ENCODE measurements at regions of chr22 and their contacts with region 1.

Region 1: GRCh38 chr22:40898850-40899357 is 37.0 kb upstream of the DNAJB7 start:
- DNase-seq: peak in 1 of 35 experiments; percentile 68
- ATAC-seq: peak; percentile 52 to 65 (median 58)
- H3K4me3 ChIP-seq: no peak overlapping the region
- H3K4me3 Mint-ChIP-seq: no peak overlapping the region
- H3K27ac ChIP-seq: no peak overlapping the region
- H3K27ac Mint-ChIP-seq: no peak overlapping the region
- H3K4me1 ChIP-seq: no peaks in the 10 kb centered on the region
- H3K4me1 Mint-ChIP-seq: peaks cover 5 to 9% (median 5%) of the 10 kb centered on the region in 3 donors
- H3K27me3 ChIP-seq: no peaks in the 10 kb centered on the region
- H3K27me3 Mint-ChIP-seq: no peaks in the 10 kb centered on the region

Region 2: GRCh38 chr22:40651563-40652501 is 247.1 kb before region 1 on chr22:
- CTCF ChIA-PET with region 1: interaction called in 1 of 2 experiments, 18 read pairs
- POLR2A ChIA-PET with region 1: no interaction called
- DNase-seq: peak; percentile 16 to 71 (median 54)
- ATAC-seq: peak; percentile 79 to 93 (median 87)
- H3K4me3 ChIP-seq: peak overlapping the region in 1 of 2 donors; percentile 58
- H3K4me3 Mint-ChIP-seq: peak overlapping the region; percentile 72 to 80 (median 75)
- H3K27ac ChIP-seq: peak overlapping the region; percentile 55
- H3K27ac Mint-ChIP-seq: peak overlapping the region; percentile 82 to 90
- H3K4me1 ChIP-seq: peaks cover 0 to 7% of the 10 kb centered on the region in 2 experiments
- H3K4me1 Mint-ChIP-seq: peaks cover 0 to 13% (median 5%) of the 10 kb centered on the region in 3 donors
- H3K27me3 ChIP-seq: no peaks in the 10 kb centered on the region
- H3K27me3 Mint-ChIP-seq: no peaks in the 10 kb centered on the region

Region 3: GRCh38 chr22:40679964-40680818 is 218.7 kb before region 1 on chr22:
- CTCF ChIA-PET with region 1: interaction called in 1 of 2 experiments, 20 read pairs
- POLR2A ChIA-PET with region 1: no interaction called
- DNase-seq: no peak
- ATAC-seq: no peak
- H3K4me3 ChIP-seq: no peak overlapping the region
- H3K4me3 Mint-ChIP-seq: no peak overlapping the region
- H3K27ac ChIP-seq: no peak overlapping the region
- H3K27ac Mint-ChIP-seq: peak overlapping the region in 1 of 2 donors; percentile 17
- H3K4me1 ChIP-seq: peaks cover 0 to 13% of the 10 kb centered on the region in 2 experiments
- H3K4me1 Mint-ChIP-seq: peaks cover 7 to 17% (median 13%) of the 10 kb centered on the region in 3 donors
- H3K27me3 ChIP-seq: peaks cover 0 to 34% of the 10 kb centered on the region in 2 experiments
- H3K27me3 Mint-ChIP-seq: peaks cover 13 to 22% of the 10 kb centered on the region in 2 donors

Region 4: DNA sequence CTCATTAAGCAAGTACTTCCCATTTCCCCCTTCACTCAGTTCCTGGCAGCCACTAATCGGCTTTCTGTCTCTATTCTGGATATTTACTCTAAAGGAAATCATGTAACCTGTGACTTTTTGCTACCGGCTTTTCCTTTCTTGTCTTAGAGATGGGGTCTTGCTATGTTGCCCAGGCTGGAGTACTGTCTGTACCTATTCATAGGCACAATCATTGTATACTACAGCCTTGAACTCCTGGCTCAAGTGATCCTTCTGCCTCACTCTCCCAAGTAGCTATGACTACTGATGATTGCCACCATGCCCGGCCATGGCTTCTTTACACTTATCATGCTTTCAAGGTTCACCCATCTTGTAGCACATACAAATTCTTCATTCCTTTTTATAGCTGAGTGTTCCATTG is 92.2 kb before region 1 on chr22:
- CTCF ChIA-PET with region 1: no interaction called
- POLR2A ChIA-PET with region 1: no interaction called
- DNase-seq: no peak
- ATAC-seq: no peak
- H3K4me3 ChIP-seq: no peak overlapping the region
- H3K4me3 Mint-ChIP-seq: no peak overlapping the region
- H3K27ac ChIP-seq: no peak overlapping the region
- H3K27ac Mint-ChIP-seq: no peak overlapping the region
- H3K4me1 ChIP-seq: no peaks in the 10 kb centered on the region
- H3K4me1 Mint-ChIP-seq: peaks cover 5 to 17% (median 13%) of the 10 kb centered on the region in 3 donors
- H3K27me3 ChIP-seq: no peaks in the 10 kb centered on the region
- H3K27me3 Mint-ChIP-seq: no peaks in the 10 kb centered on the region

Region 5: GRCh38 chr22:40877488-40877887 is 21.4 kb before region 1 on chr22:
- CTCF ChIA-PET with region 1: no interaction called
- POLR2A ChIA-PET with region 1: no interaction called
- DNase-seq: no peak
- ATAC-seq: no peak
- H3K4me3 ChIP-seq: no peak overlapping the region
- H3K4me3 Mint-ChIP-seq: no peak overlapping the region
- H3K27ac ChIP-seq: no peak overlapping the region
- H3K27ac Mint-ChIP-seq: no peak overlapping the region
- H3K4me1 ChIP-seq: no peaks in the 10 kb centered on the region
- H3K4me1 Mint-ChIP-seq: no peaks in the 10 kb centered on the region
- H3K27me3 ChIP-seq: no peaks in the 10 kb centered on the region
- H3K27me3 Mint-ChIP-seq: no peaks in the 10 kb centered on the region

Region 6: DNA sequence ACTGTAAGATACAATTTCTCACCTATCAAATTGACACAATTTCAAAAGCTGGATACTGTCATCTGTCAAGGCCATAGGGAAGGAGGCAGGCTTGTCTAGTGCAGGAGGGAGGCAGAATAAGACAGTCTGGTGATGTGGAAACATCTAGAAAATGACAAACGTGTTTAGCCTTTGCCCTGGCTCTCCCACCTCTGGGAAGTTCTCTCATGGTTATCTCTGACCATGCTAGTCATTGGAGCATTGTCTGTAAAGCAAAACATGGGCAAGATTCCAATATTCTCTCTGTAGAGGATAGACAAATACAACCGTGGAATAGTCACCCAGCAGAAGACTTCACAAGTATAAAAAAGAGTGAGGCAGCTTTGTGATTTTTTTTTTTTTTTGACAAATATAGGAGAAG is 1645.8 kb after region 1 on chr22:
- CTCF ChIA-PET with region 1: no interaction called
- POLR2A ChIA-PET with region 1: interaction called in 1 of 2 experiments, 21 read pairs
- DNase-seq: no peak
- ATAC-seq: no peak
- H3K4me3 ChIP-seq: no peak overlapping the region
- H3K4me3 Mint-ChIP-seq: no peak overlapping the region
- H3K27ac ChIP-seq: no peak overlapping the region
- H3K27ac Mint-ChIP-seq: no peak overlapping the region
- H3K4me1 ChIP-seq: no peaks in the 10 kb centered on the region
- H3K4me1 Mint-ChIP-seq: peaks cover 0 to 3% (median 0%) of the 10 kb centered on the region in 3 donors
- H3K27me3 ChIP-seq: peaks cover 0 to 5% of the 10 kb centered on the region in 2 experiments
- H3K27me3 Mint-ChIP-seq: no peaks in the 10 kb centered on the region